A673 (cell line): ENCODE measurements at regions of chr13 and their contacts with region 1.

Region 1: GRCh38 chr13:30408319-30409101 is 13.8 kb upstream of the UBE2L5 start:
- DNase-seq: no peak
- H3K4me3 ChIP-seq: no peak overlapping the region
- H3K27ac ChIP-seq: peak overlapping the region; percentile 97
- H3K4me1 ChIP-seq: peaks cover 67% of the 10 kb centered on the region
- H3K27me3 ChIP-seq: no peaks in the 10 kb centered on the region
- CTCF ChIP-seq: no peak

Region 2: DNA sequence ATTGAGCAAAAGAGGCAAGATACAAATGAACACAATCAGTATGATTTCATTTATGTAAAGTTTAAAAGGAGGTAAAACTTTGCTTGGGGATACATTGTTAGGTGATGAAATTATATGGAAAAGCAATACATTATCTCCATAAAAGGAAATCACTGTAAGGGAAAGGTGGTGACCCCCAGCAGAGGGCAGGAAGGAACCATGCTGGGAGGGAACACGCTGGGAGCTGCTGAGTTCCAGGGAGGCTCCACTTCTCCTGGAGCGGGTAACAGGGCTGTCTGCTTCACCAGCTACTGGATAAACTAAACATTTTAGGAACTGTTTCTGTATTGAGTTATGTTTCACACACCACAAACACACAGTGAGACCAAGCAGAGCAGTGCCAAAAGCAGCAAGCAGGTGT is 192.4 kb before region 1 on chr13:
- CTCF ChIA-PET with region 1: no interaction called
- POLR2A ChIA-PET with region 1: no interaction called
- intact Hi-C with region 1: loop called (anchors 1 kb)
- DNase-seq: peak; percentile 97
- H3K4me3 ChIP-seq: no peak overlapping the region
- H3K27ac ChIP-seq: peak overlapping the region; percentile 91
- H3K4me1 ChIP-seq: peaks cover 12% of the 10 kb centered on the region
- H3K27me3 ChIP-seq: no peaks in the 10 kb centered on the region
- CTCF ChIP-seq: no peak

Region 3: DNA sequence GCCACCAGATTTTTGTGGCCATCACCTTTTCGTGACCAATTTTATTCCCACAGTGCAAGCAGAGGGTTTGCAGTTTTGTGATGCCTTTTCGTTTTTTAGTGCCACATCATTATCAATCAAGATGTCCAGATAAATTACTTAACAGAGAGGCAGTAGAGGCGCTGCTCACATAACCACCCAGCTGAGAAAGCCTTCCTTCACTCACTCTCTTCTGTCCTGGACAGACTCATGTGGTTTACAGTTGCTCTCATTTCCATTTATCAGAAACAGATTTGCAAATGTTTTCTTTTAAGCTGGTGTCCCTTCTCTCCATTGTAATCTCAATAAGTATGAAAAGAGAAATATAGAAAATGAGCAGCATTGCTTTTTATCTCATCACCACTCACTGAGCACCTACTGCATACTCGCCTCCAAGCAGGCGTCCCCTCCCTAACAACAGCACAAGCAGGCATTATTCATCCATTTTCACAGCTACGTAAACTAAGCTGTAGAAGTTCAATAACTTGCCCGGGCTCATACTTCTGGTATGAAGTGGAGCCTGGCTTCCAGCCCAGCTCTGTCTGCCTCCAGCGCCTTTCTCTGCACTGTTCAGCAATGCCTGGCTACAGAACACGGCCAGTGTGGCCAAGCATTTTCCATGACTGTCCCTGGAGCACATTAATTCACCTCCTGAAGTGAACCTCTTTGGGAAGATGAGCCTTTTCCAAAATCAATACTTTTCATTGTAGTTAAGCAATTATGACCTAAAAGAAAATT is 66.5 kb before region 1 on chr13:
- CTCF ChIA-PET with region 1: interaction called, 3 read pairs
- POLR2A ChIA-PET with region 1: no interaction called
- intact Hi-C with region 1: loop called (anchors 2 kb)
- DNase-seq: peak; percentile 65
- H3K4me3 ChIP-seq: no peak overlapping the region
- H3K27ac ChIP-seq: peak overlapping the region; percentile 68
- H3K4me1 ChIP-seq: peaks cover 31% of the 10 kb centered on the region
- H3K27me3 ChIP-seq: no peaks in the 10 kb centered on the region
- CTCF ChIP-seq: no peak

Region 4: DNA sequence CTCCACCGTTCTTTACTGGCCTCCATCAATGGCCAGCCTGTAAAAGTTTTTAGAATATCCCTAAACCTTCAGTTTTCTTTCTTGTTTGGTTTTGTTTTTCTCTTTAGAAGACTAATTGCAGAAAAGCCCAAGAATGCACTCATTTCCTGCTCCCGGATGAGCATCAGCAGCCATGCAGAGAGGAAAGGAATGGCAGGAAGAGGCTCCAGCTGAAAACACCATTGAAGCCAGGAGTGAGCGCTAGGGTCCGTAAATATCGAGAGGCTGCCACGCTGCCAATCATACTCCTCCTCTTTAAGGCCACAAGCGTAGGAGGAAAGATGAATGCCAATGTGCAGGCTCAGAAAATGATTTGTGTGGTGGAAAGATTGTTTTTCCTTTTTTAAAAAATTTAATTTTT is 43.6 kb before region 1 on chr13:
- CTCF ChIA-PET with region 1: no interaction called
- POLR2A ChIA-PET with region 1: no interaction called
- intact Hi-C with region 1: loop called (anchors 2 kb)
- DNase-seq: peak; percentile 92
- H3K4me3 ChIP-seq: no peak overlapping the region
- H3K27ac ChIP-seq: peak overlapping the region; percentile 87
- H3K4me1 ChIP-seq: peaks cover 47% of the 10 kb centered on the region
- H3K27me3 ChIP-seq: no peaks in the 10 kb centered on the region
- CTCF ChIP-seq: no peak

Region 5: DNA sequence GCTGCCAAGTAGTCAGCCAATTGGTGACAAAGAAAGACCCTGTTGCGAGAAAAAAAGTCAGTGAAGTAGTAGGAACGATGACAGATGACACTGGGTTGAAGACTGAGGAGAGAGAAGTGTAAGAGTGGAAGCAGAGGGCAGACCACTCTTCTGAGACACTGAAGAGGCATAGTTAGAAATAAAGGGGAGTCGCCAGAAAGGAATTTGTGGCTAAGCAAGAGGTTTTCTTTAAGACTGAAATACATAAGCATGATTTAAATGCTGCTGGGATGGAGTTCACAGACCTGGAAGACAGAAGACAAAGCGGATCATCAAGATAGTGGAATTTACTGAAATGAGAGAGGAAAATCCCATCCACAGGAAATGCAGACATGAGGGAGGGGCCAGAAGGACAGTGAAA is 153.0 kb after region 1 on chr13:
- CTCF ChIA-PET with region 1: no interaction called
- POLR2A ChIA-PET with region 1: no interaction called
- intact Hi-C with region 1: no loop called
- DNase-seq: no peak
- H3K4me3 ChIP-seq: no peak overlapping the region
- H3K27ac ChIP-seq: no peak overlapping the region
- H3K4me1 ChIP-seq: peaks cover 3% of the 10 kb centered on the region
- H3K27me3 ChIP-seq: no peaks in the 10 kb centered on the region
- CTCF ChIP-seq: no peak

Region 6: GRCh38 chr13:30802953-30803478 is 394.5 kb after region 1 on chr13:
- CTCF ChIA-PET with region 1: no interaction called
- POLR2A ChIA-PET with region 1: no interaction called
- intact Hi-C with region 1: loop called (anchors 5 kb)
- DNase-seq: peak; percentile 90
- H3K4me3 ChIP-seq: no peak overlapping the region
- H3K27ac ChIP-seq: no peak overlapping the region
- H3K4me1 ChIP-seq: peaks cover 24% of the 10 kb centered on the region
- H3K27me3 ChIP-seq: no peaks in the 10 kb centered on the region
- CTCF ChIP-seq: peak; percentile 98